ENCODE measurements at regions of chr21 and their contacts with region 1.

Region 1: GRCh38 chr21:42381334-42381984 is 14.4 kb downstream of the TMPRSS3 start:
- DNase-seq: peak; percentile 48
- H3K4me3 ChIP-seq: no peak overlapping the region
- H3K27ac ChIP-seq: no peak overlapping the region
- H3K4me1 ChIP-seq: no peaks in the 10 kb centered on the region
- H3K27me3 ChIP-seq: no peaks in the 10 kb centered on the region
- CTCF ChIP-seq: peak; percentile 72 to 94

Region 2: GRCh38 chr21:42164064-42164789 is 217.2 kb before region 1 on chr21:
- CTCF ChIA-PET with region 1: no interaction called
- dilution Hi-C with region 1: no loop called
- in situ Hi-C with region 1: no loop called
- intact Hi-C with region 1: loop called (anchors 1 kb)
- DNase-seq: peak; percentile 20
- H3K4me3 ChIP-seq: no peak overlapping the region
- H3K27ac ChIP-seq: no peak overlapping the region
- H3K4me1 ChIP-seq: no peaks in the 10 kb centered on the region
- H3K27me3 ChIP-seq: no peaks in the 10 kb centered on the region
- CTCF ChIP-seq: peak; percentile 50 to 65

Region 3: DNA sequence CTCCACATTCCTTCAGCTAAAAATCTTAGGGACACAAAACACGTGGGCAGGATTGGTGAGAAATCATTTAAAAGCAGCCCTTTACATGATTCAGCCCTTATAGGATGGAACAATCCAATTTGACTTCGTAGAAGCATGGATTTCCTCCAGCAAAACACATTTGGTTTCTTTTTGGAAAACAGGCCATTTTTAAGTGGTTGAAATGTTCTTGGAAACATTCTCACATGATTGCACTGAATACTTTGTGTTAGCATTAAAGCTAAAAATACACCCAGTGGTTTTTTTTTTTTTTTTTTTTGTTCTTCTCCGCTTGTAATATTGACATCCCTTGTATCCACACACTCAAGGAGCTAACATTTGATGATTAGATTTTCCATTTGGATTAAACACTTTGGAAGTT is 204.6 kb before region 1 on chr21:
- CTCF ChIA-PET with region 1: no interaction called
- dilution Hi-C with region 1: no loop called
- in situ Hi-C with region 1: no loop called
- intact Hi-C with region 1: no loop called
- DNase-seq: no peak
- H3K4me3 ChIP-seq: no peak overlapping the region
- H3K27ac ChIP-seq: no peak overlapping the region
- H3K4me1 ChIP-seq: peaks cover under 1% of the 10 kb centered on the region
- H3K27me3 ChIP-seq: no peaks in the 10 kb centered on the region
- CTCF ChIP-seq: no peak

Region 4: GRCh38 chr21:42309753-42310221 is 71.7 kb before region 1 on chr21:
- CTCF ChIA-PET with region 1: interaction called, 12 read pairs
- dilution Hi-C with region 1: no loop called
- in situ Hi-C with region 1: no loop called
- intact Hi-C with region 1: loop called (anchors 1 kb)
- DNase-seq: no peak
- H3K4me3 ChIP-seq: no peak overlapping the region
- H3K27ac ChIP-seq: no peak overlapping the region
- H3K4me1 ChIP-seq: no peaks in the 10 kb centered on the region
- H3K27me3 ChIP-seq: no peaks in the 10 kb centered on the region
- CTCF ChIP-seq: peak; percentile 70 to 80

Region 5: DNA sequence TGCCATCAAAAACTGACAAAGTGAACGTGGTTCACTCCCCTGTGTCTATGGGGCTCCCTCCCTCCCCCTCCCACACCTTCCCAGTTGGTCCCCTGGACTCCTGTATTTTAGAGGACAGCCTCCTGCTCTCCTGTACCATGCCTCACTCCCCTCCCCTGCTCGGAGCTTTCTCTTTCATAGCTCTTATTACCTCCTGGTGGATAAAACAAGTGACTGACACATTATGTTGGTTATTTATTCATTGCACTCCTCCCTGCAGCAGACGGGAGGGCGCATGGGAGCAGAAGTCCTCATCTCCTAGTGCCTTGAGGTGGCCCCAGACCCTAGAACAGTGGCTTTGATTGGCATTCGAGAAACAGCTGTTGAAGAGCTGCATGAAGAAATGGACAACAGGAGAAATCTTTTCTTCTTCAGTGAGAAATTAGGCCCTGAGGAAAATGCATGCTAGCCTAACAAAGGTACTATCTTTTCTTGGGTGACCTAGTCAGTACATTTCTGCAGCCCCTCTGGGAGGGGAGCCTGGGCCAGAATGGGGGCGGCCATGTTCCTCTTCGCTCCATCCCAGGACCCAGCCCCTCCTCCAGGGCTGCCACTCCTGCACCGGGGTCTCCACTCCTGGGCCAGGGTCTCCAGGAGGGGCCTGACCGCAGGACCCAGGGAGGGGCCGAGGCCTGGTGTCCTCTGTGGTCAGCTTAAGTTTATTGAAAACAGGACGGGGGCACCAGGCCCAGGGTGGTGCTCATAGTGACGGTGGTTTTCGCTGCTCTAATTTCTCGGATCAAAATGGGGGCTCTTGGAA is 13.9 kb before region 1 on chr21:
- CTCF ChIA-PET with region 1: interaction called, 11 read pairs
- dilution Hi-C with region 1: no loop called
- in situ Hi-C with region 1: no loop called
- intact Hi-C with region 1: no loop called
- DNase-seq: no peak
- H3K4me3 ChIP-seq: no peak overlapping the region
- H3K27ac ChIP-seq: no peak overlapping the region
- H3K4me1 ChIP-seq: no peaks in the 10 kb centered on the region
- H3K27me3 ChIP-seq: no peaks in the 10 kb centered on the region
- CTCF ChIP-seq: no peak

Region 6: DNA sequence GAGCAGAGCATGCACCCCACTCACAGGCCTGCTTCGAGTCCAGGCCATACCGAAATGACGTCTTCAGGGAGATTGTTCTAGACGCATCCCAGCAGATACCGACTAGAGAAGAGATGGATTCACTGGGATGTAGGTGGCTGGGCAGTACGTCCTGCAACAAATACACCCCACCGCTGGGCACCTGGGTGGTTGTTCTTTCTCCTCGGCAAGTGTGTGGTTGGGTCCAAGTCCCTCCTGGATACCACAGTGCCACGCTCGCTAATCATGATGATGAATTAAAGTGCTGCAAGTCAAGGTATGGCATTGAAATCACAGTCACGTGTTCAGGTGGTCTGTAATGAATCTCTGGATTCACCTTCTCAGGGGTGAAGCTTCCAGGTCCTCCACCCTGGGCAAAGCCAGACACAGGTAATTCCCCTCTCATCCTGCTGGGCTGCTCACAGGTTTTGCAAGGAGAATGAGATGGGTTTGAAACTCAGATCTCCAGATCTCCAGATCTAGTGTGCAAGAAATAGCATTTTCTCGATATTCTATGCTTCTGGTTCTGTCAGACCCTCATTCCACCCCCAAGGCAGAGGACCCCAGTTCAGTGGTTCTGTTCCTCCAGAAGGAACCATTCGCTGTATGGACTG is 68.0 kb after region 1 on chr21:
- CTCF ChIA-PET with region 1: no interaction called
- dilution Hi-C with region 1: no loop called
- in situ Hi-C with region 1: no loop called
- intact Hi-C with region 1: loop called (anchors 2 kb)
- DNase-seq: no peak
- H3K4me3 ChIP-seq: no peak overlapping the region
- H3K27ac ChIP-seq: no peak overlapping the region
- H3K4me1 ChIP-seq: no peaks in the 10 kb centered on the region
- H3K27me3 ChIP-seq: no peaks in the 10 kb centered on the region
- CTCF ChIP-seq: no peak